ENCODE measurements at regions of chr9 and their contacts with region 1.

Region 1: GRCh38 chr9:137070201-137070905 is at the start of gene SAPCD2:
- DNase-seq: peak; percentile 87 to 96
- H3K4me3 ChIP-seq: peak within 1 kb of the TSS; percentile 67
- H3K27ac ChIP-seq: no peak within 1 kb of the TSS
- H3K4me1 ChIP-seq: peaks cover 25% of the 10 kb centered on the region
- H3K27me3 ChIP-seq: no peaks in the 10 kb centered on the region
- CTCF ChIP-seq: no peak
- total RNA-seq, gene SAPCD2: 46.9 and 50.3 TPM in 2 replicates

Region 2: GRCh38 chr9:136939996-136940525 is 130.3 kb before region 1 on chr9:
- CTCF ChIA-PET with region 1: no interaction called
- POLR2A ChIA-PET with region 1: no interaction called
- intact Hi-C with region 1: no loop called
- DNase-seq: no peak
- H3K4me3 ChIP-seq: no peak overlapping the region
- H3K27ac ChIP-seq: no peak overlapping the region
- H3K4me1 ChIP-seq: peaks cover 6% of the 10 kb centered on the region; the same call in 1 of the 2 replicates
- H3K27me3 ChIP-seq: no peaks in the 10 kb centered on the region
- CTCF ChIP-seq: no peak

Region 3: DNA sequence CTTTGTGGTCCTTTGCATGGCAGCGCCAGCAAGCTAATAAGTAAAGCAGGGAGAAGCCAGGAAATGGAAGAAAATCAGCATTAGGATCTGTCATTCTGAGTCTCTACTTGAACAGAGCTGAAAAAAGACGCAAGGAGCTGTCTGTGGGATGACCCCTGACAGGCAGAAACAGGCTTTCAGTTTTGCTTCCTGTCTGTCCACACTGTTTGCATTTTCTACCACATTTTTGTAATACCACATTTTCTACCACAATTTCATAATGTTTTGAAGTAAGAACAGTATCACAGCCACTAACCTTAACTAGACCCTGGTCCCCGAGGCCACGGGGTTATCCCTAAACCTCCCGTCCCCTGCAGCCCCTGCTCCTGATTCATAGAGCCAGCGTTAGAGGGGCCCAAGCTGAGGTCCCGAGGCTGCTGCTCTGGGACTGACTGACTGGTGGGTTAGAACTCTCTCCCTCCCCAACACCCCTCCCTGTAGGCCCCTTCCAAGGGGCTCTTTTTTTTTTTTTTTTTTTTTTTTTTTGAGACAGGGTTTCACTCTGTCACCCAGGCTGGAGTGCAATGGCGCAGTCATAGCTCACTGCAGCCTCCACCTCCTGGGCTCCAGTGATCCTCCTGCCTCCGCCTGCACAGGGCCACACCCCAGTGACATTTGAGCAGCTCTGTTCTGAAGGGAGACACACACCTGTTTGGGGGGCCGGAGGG is 70.0 kb before region 1 on chr9:
- CTCF ChIA-PET with region 1: interaction called, 20 read pairs
- POLR2A ChIA-PET with region 1: interaction called, 5 read pairs
- intact Hi-C with region 1: no loop called
- DNase-seq: no peak
- H3K4me3 ChIP-seq: no peak overlapping the region
- H3K27ac ChIP-seq: no peak overlapping the region
- H3K4me1 ChIP-seq: peaks cover 30% of the 10 kb centered on the region
- H3K27me3 ChIP-seq: no peaks in the 10 kb centered on the region
- CTCF ChIP-seq: no peak

Region 4: GRCh38 chr9:137086531-137087408 is 16.4 kb after region 1 on chr9 and contains the start of gene MAN1B1:
- CTCF ChIA-PET with region 1: interaction called, 5 read pairs
- POLR2A ChIA-PET with region 1: interaction called, 15 read pairs
- intact Hi-C with region 1: loop called (anchors 1 kb)
- DNase-seq: peak; percentile 97 to 100
- H3K4me3 ChIP-seq: peak within 1 kb of the TSS; percentile 88
- H3K27ac ChIP-seq: peak within 1 kb of the TSS; percentile 80
- H3K4me1 ChIP-seq: peaks cover 39% of the 10 kb centered on the region
- H3K27me3 ChIP-seq: no peaks in the 10 kb centered on the region
- CTCF ChIP-seq: no peak
- total RNA-seq, gene MAN1B1: 79.3 and 107 TPM in 2 replicates

Region 5: DNA sequence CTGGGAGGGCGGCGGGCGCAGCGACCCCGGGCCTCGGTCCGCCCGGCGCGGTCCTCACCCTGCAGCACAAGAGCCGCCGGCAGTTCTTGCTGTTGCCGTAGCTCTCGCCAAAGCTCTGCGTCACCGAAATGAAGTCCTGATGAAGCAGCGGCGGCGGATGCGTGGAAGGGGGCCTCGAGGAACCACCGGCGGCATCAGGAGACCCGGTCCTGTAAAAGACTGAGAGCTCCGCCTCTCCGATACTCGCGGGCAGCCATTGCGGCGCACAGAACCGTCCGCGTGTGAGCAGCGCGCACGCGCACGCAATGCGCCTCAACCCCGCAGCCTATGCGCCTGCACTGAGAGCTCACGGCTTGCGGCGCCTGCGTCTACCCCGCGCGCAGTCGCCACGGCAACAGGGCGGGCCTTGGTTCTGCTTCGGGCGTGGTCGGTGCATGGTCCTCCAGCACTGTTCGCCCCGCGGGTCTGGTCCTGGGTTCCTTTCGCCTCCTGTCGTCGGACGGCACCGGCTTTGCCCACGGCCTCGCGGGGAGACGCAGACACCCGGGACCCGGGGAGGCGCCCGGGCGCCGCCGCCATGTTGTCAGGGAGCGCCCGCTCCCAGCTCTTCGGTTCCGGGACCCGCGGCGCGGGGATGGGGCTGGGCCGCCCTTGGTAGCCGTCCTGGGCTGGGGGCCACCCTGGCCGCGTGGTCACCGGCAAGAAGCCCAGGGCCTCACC is 59.3 kb after region 1 on chr9:
- CTCF ChIA-PET with region 1: interaction called, 10 read pairs
- POLR2A ChIA-PET with region 1: no interaction called
- intact Hi-C with region 1: no loop called
- DNase-seq: peak; percentile 76 to 93
- H3K4me3 ChIP-seq: peak overlapping the region; percentile 86
- H3K27ac ChIP-seq: peak overlapping the region; percentile 54
- H3K4me1 ChIP-seq: peaks cover 28% of the 10 kb centered on the region
- H3K27me3 ChIP-seq: no peaks in the 10 kb centered on the region
- CTCF ChIP-seq: no peak

Region 6: DNA sequence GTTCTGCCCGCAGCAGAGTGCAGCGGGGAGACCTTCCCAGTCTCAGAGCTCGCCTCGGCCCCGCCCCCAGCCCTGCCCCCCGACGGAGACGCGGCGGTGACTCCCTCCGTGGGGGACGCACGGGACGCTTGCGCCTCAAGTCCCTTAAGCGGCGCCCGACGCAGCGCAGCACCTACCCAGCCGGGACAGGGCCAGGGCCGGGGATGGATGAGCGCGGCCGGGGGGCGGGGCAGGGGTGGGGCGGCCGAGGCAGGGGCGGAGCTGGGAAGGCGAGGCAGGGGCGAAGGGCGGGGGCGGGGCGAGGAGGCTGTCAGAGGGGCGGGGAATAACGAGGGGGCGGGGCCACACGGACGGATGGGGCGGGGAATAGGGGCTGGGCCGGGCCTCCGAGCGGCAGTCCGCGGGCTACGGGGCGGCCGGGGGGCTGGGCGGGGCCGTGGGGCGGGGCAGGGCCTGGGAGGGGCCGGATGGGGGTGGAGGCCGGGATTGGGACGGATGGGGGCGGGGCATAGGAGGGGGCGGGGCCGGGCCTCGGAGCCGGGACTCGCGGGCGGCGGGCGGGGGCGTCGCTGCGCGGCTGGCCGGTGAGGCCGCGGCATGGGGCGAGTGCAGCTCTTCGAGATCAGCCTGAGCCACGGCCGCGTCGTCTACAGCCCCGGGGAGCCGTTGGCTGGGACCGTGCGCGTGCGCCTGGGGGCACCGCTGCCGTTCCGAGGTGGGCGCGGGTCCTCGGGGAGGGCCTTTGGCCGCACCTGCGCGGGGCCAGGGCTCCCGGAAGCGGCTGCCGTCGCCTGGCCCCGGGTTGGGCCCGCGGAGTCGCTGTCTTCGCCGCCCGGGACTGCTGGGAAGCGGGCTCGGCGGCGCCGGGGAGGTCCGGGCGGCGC is 535.0 kb after region 1 on chr9 and contains the start of gene ARRDC1:
- CTCF ChIA-PET with region 1: interaction called, 10 read pairs
- POLR2A ChIA-PET with region 1: no interaction called
- intact Hi-C with region 1: no loop called
- DNase-seq: peak; percentile 80 to 95
- H3K4me3 ChIP-seq: peak within 1 kb of the TSS; percentile 57
- H3K27ac ChIP-seq: peak within 1 kb of the TSS; percentile 30; the same call in 1 of the 2 replicates
- H3K4me1 ChIP-seq: peaks cover 38% of the 10 kb centered on the region
- H3K27me3 ChIP-seq: no peaks in the 10 kb centered on the region
- CTCF ChIP-seq: no peak
- total RNA-seq, gene ARRDC1: 116 and 127 TPM in 2 replicates

Region 7: GRCh38 chr9:137816531-137817235 is 746.3 kb after region 1 on chr9:
- CTCF ChIA-PET with region 1: no interaction called
- POLR2A ChIA-PET with region 1: no interaction called
- intact Hi-C with region 1: no loop called
- DNase-seq: no peak
- H3K4me3 ChIP-seq: no peak overlapping the region
- H3K27ac ChIP-seq: no peak overlapping the region
- H3K4me1 ChIP-seq: no peaks in the 10 kb centered on the region
- H3K27me3 ChIP-seq: no peaks in the 10 kb centered on the region
- CTCF ChIP-seq: no peak

Measured in PC-9 (cell line).